ENCODE measurements at regions of chr11 and their contacts with region 1.

Region 1: GRCh38 chr11:75532200-75533048 is 6.7 kb upstream of the GDPD5 start:
- DNase-seq: peak; percentile 70 to 91 (median 84)
- ATAC-seq: peak; percentile 91
- H3K4me3 ChIP-seq: no peak overlapping the region
- H3K4me3 Mint-ChIP-seq: no peak overlapping the region
- H3K27ac ChIP-seq: no peak overlapping the region
- H3K27ac Mint-ChIP-seq: no peak overlapping the region
- H3K4me1 ChIP-seq: peaks cover 8% of the 10 kb centered on the region
- H3K4me1 Mint-ChIP-seq: peaks cover 31% of the 10 kb centered on the region
- H3K27me3 ChIP-seq: no peaks in the 10 kb centered on the region
- H3K27me3 Mint-ChIP-seq: no peaks in the 10 kb centered on the region
- CTCF ChIP-seq: peak; percentile 98

Region 2: DNA sequence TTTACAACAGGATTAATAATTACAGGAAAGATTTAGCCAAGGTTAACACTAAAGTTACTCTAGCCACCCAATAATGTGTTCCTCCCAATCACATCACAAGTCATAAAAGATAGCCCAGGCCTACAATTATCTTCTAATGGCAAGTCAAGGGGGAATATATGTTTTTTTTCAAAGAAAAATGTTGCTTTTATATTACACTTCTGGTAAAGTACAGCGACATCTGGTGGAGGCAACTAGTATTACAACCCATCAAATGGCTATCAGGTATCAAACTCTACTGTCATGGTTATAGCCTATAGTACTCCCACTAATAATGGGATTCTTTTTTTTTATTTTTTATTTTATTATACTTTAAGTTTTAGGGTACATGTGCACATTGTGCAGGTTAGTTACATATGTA is 655.3 kb before region 1 on chr11:
- CTCF ChIA-PET with region 1: no interaction called
- POLR2A ChIA-PET with region 1: no interaction called
- intact Hi-C with region 1: no loop called
- DNase-seq: peak in 1 of 9 experiments; percentile 22
- ATAC-seq: no peak
- H3K4me3 ChIP-seq: no peak overlapping the region
- H3K4me3 Mint-ChIP-seq: no peak overlapping the region
- H3K27ac ChIP-seq: no peak overlapping the region
- H3K27ac Mint-ChIP-seq: no peak overlapping the region
- H3K4me1 ChIP-seq: no peaks in the 10 kb centered on the region
- H3K4me1 Mint-ChIP-seq: no peaks in the 10 kb centered on the region
- H3K27me3 ChIP-seq: no peaks in the 10 kb centered on the region
- H3K27me3 Mint-ChIP-seq: no peaks in the 10 kb centered on the region
- CTCF ChIP-seq: peak; percentile 35

Region 3: GRCh38 chr11:75313513-75314272 is 218.7 kb before region 1 on chr11:
- CTCF ChIA-PET with region 1: no interaction called
- POLR2A ChIA-PET with region 1: no interaction called
- intact Hi-C with region 1: no loop called
- DNase-seq: no peak
- ATAC-seq: no peak
- H3K4me3 ChIP-seq: no peak overlapping the region
- H3K4me3 Mint-ChIP-seq: no peak overlapping the region
- H3K27ac ChIP-seq: no peak overlapping the region
- H3K27ac Mint-ChIP-seq: no peak overlapping the region
- H3K4me1 ChIP-seq: peaks cover 7% of the 10 kb centered on the region
- H3K4me1 Mint-ChIP-seq: peaks cover 25% of the 10 kb centered on the region
- H3K27me3 ChIP-seq: no peaks in the 10 kb centered on the region
- H3K27me3 Mint-ChIP-seq: no peaks in the 10 kb centered on the region
- CTCF ChIP-seq: no peak

Region 4: GRCh38 chr11:75406338-75406777 is 126.1 kb before region 1 on chr11:
- CTCF ChIA-PET with region 1: interaction called, 20 read pairs
- POLR2A ChIA-PET with region 1: no interaction called
- intact Hi-C with region 1: no loop called
- DNase-seq: no peak
- ATAC-seq: no peak
- H3K4me3 ChIP-seq: no peak overlapping the region
- H3K4me3 Mint-ChIP-seq: no peak overlapping the region
- H3K27ac ChIP-seq: no peak overlapping the region
- H3K27ac Mint-ChIP-seq: no peak overlapping the region
- H3K4me1 ChIP-seq: peaks cover 19% of the 10 kb centered on the region
- H3K4me1 Mint-ChIP-seq: peaks cover 52% of the 10 kb centered on the region
- H3K27me3 ChIP-seq: no peaks in the 10 kb centered on the region
- H3K27me3 Mint-ChIP-seq: no peaks in the 10 kb centered on the region
- CTCF ChIP-seq: no peak

Region 5: GRCh38 chr11:75428281-75428724 is 104.1 kb before region 1 on chr11:
- CTCF ChIA-PET with region 1: interaction called, 13 read pairs
- POLR2A ChIA-PET with region 1: no interaction called
- intact Hi-C with region 1: no loop called
- DNase-seq: peak in 8 of 9 experiments; percentile 27 to 84 (median 62)
- ATAC-seq: peak; percentile 64
- H3K4me3 ChIP-seq: peak overlapping the region; percentile 13 to 22
- H3K4me3 Mint-ChIP-seq: peak overlapping the region; percentile 61
- H3K27ac ChIP-seq: no peak overlapping the region
- H3K27ac Mint-ChIP-seq: no peak overlapping the region
- H3K4me1 ChIP-seq: peaks cover 9% of the 10 kb centered on the region
- H3K4me1 Mint-ChIP-seq: peaks cover 16% of the 10 kb centered on the region
- H3K27me3 ChIP-seq: peaks cover 11 to 13% of the 10 kb centered on the region in 2 experiments
- H3K27me3 Mint-ChIP-seq: peaks cover 34% of the 10 kb centered on the region
- CTCF ChIP-seq: no peak

Region 6: GRCh38 chr11:75450826-75451821 is 81.3 kb before region 1 on chr11:
- CTCF ChIA-PET with region 1: interaction called, 390 read pairs
- POLR2A ChIA-PET with region 1: no interaction called
- intact Hi-C with region 1: no loop called
- DNase-seq: peak in 5 of 9 experiments; percentile 27 to 53 (median 42)
- ATAC-seq: no peak
- H3K4me3 ChIP-seq: no peak overlapping the region
- H3K4me3 Mint-ChIP-seq: no peak overlapping the region
- H3K27ac ChIP-seq: no peak overlapping the region
- H3K27ac Mint-ChIP-seq: no peak overlapping the region
- H3K4me1 ChIP-seq: no peaks in the 10 kb centered on the region
- H3K4me1 Mint-ChIP-seq: no peaks in the 10 kb centered on the region
- H3K27me3 ChIP-seq: no peaks in the 10 kb centered on the region
- H3K27me3 Mint-ChIP-seq: no peaks in the 10 kb centered on the region
- CTCF ChIP-seq: peak; percentile 48

Region 7: DNA sequence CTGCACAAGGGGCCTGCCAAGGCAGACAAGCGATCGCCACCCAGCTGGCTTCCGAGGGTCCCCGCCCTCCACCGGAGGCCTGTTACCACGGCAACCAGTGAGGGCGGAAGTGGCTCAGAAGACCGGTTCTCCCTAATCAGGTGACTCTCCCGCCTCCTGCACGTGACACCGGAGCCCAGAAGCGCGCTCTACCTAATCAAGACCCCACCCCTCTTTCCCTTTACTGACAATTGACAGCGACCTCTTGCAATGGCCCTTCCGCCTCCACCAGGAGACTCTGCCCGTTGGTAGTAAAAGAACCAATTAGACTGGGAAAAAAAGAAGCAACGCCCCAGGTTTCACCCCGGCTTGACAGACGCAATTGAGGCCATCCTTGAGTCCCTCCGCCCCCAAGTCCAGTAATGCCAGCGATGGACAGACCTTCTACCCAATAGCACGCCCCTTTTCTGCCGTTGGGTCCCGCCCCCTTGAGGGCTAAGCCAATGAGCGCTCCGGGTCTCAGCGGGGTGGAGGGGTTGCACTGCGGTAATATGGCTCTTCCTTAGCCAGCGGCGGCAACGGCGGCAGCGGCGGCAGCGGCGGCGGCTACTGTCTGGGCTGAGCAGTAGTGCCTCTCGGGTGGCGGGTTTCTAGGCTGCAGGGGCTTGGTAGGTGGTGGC is 282.4 kb after region 1 on chr11 and contains the start of gene UVRAG:
- CTCF ChIA-PET with region 1: no interaction called
- POLR2A ChIA-PET with region 1: no interaction called
- intact Hi-C with region 1: no loop called
- DNase-seq: peak; percentile 97 to 99 (median 98)
- ATAC-seq: peak; percentile 88
- H3K4me3 ChIP-seq: peak within 1 kb of the TSS; percentile 65 to 93
- H3K4me3 Mint-ChIP-seq: no peak within 1 kb of the TSS
- H3K27ac ChIP-seq: peak within 1 kb of the TSS; percentile 77 to 88
- H3K27ac Mint-ChIP-seq: peak within 1 kb of the TSS; percentile 97
- H3K4me1 ChIP-seq: peaks cover 23% of the 10 kb centered on the region
- H3K4me1 Mint-ChIP-seq: peaks cover 21% of the 10 kb centered on the region
- H3K27me3 ChIP-seq: no peaks in the 10 kb centered on the region
- H3K27me3 Mint-ChIP-seq: no peaks in the 10 kb centered on the region
- CTCF ChIP-seq: no peak
- total RNA-seq, gene UVRAG: 14.3 to 15.1 TPM